Vagina (tissue), 2 donors: ENCODE measurements at regions of chr13 and their contacts with region 1.

Region 1: DNA sequence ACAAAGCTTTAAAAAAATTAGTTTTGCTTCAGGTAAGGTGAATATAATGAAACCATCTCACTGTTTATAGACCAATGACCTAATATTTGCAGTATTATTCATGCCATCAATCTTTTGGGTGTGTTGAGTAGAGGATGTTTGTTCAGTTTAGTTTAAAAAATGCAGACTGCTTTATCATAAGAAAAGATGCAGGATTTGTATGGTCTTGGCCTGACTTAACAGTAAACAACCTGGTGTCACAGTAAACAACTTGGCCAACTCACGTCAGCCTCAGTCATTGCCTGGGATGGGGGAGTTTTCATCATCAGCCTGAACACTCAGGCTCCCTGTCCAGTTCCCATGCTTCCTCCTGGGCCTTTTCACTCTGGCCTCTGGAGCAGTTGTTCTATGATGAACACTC is 55.1 kb downstream of the LMO7 start:
- DNase-seq: no peak
- H3K4me3 ChIP-seq: no peak overlapping the region
- H3K27ac ChIP-seq: no peak overlapping the region
- H3K4me1 ChIP-seq: no peaks in the 10 kb centered on the region
- H3K27me3 ChIP-seq: no peaks in the 10 kb centered on the region
- CTCF ChIP-seq: no peak
- POLR2A ChIP-seq: no peak

Region 2: GRCh38 chr13:76489274-76489673 is 798.1 kb after region 1 on chr13:
- intact Hi-C with region 1: loop called (anchors 10 kb)
- DNase-seq: no peak
- H3K4me3 ChIP-seq: no peak overlapping the region
- H3K27ac ChIP-seq: no peak overlapping the region
- H3K4me1 ChIP-seq: no peaks in the 10 kb centered on the region
- H3K27me3 ChIP-seq: no peaks in the 10 kb centered on the region
- CTCF ChIP-seq: no peak
- POLR2A ChIP-seq: no peak